Calu3 (cell line): ENCODE measurements at regions of chr2 and their contacts with region 1.

Region 1: DNA sequence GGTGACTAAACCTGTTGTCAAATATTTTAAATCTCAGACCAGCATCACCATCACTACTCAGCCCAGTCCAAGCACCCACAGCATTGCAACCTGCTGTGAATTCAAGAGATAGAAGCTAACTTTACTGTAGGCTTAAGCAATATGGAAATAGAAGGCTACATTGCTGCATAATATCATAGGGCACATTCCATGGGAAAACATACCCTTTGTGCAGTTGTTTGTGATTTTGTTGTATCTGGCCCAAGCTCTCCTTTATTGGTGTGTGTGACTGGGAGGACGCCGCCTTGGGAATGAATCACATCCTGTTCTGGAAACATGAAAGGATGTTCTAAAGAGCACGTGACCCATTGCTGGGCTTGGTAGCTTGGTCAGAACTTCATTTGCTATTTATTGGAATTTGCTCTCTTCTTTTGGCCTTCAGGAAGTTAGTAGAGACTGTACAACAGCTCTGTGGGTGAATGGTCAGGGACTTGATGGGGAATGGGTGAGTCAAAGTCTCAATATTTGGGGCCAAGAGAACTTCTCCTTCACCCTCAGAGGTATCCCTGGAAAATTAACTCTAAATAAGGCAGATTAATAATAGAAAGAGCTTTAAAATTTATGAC is 106.8 kb upstream of the SERPINE2 start:
- DNase-seq: no peak
- H3K4me3 Mint-ChIP-seq: no peak overlapping the region
- H3K27ac Mint-ChIP-seq: peak overlapping the region; percentile 14
- H3K4me1 Mint-ChIP-seq: peaks cover 46% of the 10 kb centered on the region
- H3K27me3 Mint-ChIP-seq: no peaks in the 10 kb centered on the region
- CTCF ChIP-seq: no peak

Region 2: DNA sequence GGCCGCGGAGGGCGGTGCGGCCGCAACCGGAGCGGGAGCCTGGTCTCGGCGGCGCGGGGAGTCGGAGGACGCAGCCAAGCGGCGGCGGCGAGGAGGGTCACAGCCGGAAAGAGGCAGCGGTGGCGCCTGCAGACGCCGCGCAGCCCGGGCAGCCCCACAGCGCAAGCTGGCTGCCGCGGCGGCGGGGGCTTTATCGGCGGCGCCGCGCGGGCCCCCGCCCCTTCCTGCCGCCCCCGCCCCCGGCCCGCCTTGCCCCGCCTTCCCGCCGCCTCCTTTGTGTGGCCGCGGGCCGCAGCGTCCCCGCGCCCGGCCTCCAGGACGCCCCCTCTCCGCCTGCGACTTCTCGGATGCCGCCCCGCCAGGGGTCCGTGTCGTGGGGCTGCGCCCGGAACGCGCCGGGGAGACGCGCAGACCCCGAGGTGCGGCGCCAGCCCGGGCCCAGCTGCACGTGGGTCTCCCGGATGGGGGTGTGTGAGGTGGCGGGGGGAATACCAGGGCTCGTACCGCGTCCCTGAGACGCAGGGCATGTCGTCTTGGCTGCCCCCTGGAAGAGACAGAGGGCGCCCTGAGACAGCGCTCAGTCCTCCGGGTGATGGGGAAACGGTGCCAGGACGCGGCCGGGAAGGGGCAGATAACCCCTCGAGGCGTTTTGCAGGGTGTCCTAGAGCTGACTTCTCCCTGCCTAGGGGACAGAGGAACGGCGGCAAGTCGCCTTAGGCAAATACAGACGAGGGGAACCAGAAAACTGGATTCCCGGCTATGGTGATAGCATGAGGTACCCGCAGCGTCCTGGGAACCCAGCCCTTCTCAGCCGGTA is 106.5 kb before region 1 on chr2 and contains the start of gene SERPINE2:
- CTCF ChIA-PET with region 1: no interaction called
- intact Hi-C with region 1: loop called (anchors 1 kb)
- DNase-seq: peak; percentile 76
- H3K4me3 Mint-ChIP-seq: peak within 1 kb of the TSS; percentile 93
- H3K27ac Mint-ChIP-seq: peak within 1 kb of the TSS; percentile 59
- H3K4me1 Mint-ChIP-seq: peaks cover 40% of the 10 kb centered on the region
- H3K27me3 Mint-ChIP-seq: peaks cover 38% of the 10 kb centered on the region
- CTCF ChIP-seq: no peak
- total RNA-seq, gene SERPINE2: 34.7 and 39.7 TPM in 2 replicates

Region 3: GRCh38 chr2:224268441-224268840 is 122.6 kb after region 1 on chr2:
- CTCF ChIA-PET with region 1: interaction called, 3 read pairs
- intact Hi-C with region 1: loop called (anchors 10 kb)
- DNase-seq: peak; percentile 3
- H3K4me3 Mint-ChIP-seq: no peak overlapping the region
- H3K27ac Mint-ChIP-seq: peak overlapping the region; percentile 53
- H3K4me1 Mint-ChIP-seq: peaks cover 17% of the 10 kb centered on the region
- H3K27me3 Mint-ChIP-seq: no peaks in the 10 kb centered on the region
- CTCF ChIP-seq: no peak

Region 4: GRCh38 chr2:224333726-224334482 is 188.1 kb after region 1 on chr2:
- CTCF ChIA-PET with region 1: no interaction called
- intact Hi-C with region 1: no loop called
- DNase-seq: no peak
- H3K4me3 Mint-ChIP-seq: no peak overlapping the region
- H3K27ac Mint-ChIP-seq: no peak overlapping the region
- H3K4me1 Mint-ChIP-seq: no peaks in the 10 kb centered on the region
- H3K27me3 Mint-ChIP-seq: peaks cover 2% of the 10 kb centered on the region
- CTCF ChIP-seq: no peak